ENCODE measurements at regions of chr11 and their contacts with region 1.

Region 1: GRCh38 chr11:33179348-33179803 is 18.1 kb upstream of the CSTF3 start:
- DNase-seq: no peak
- ATAC-seq: no peak
- H3K4me3 ChIP-seq: no peak overlapping the region
- H3K4me3 Mint-ChIP-seq: peak overlapping the region in 1 of 10 donors; percentile 70
- H3K27ac ChIP-seq: no peak overlapping the region
- H3K27ac Mint-ChIP-seq: peak overlapping the region in 1 of 9 donors; percentile 64
- H3K4me1 ChIP-seq: no peaks in the 10 kb centered on the region
- H3K4me1 Mint-ChIP-seq: peaks cover 6 to 20% (median 10%) of the 10 kb centered on the region in 7 donors
- H3K27me3 ChIP-seq: no peaks in the 10 kb centered on the region
- H3K27me3 Mint-ChIP-seq: no peaks in the 10 kb centered on the region

Region 2: DNA sequence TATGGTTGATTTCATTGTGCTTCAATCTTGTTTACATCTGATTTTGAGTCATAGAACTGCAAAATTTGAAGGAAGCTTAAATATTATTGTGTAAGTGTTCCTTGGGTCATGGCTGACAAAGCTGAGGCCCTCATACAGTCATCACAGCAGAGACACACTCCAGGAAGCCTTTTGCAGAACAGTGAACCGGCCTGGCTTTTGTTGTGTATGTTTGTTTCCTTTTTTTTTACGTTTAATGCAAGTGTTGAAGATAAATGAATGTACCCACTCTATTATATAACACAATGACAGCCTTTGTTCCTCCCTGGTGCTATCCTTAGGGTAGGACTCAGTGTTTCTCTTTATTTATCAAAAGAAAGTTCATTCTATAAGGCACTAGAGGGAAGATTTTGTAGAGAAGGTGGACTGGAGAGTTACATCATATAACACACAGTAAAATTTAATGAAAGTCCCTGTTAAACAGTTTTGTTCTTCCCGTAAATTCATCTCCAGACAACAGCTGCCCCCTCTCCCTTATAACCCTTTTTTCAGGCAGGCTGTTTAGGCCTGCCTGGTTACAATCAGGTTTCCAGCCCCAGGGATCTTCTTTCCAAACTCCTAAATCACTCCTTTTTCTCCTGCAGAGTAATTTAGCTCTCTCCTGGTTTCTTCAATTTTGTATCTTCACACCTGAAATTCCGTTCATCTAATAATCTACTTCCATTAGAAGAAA is 16.2 kb after region 1 on chr11:
- CTCF ChIA-PET with region 1: no interaction called
- POLR2A ChIA-PET with region 1: interaction called, 11 read pairs
- intact Hi-C with region 1: no loop called
- DNase-seq: no peak
- ATAC-seq: peak; percentile 88
- H3K4me3 ChIP-seq: no peak overlapping the region
- H3K4me3 Mint-ChIP-seq: no peak overlapping the region
- H3K27ac ChIP-seq: no peak overlapping the region
- H3K27ac Mint-ChIP-seq: no peak overlapping the region
- H3K4me1 ChIP-seq: no peaks in the 10 kb centered on the region
- H3K4me1 Mint-ChIP-seq: peaks cover 0 to 7% (median 0%) of the 10 kb centered on the region in 7 donors
- H3K27me3 ChIP-seq: no peaks in the 10 kb centered on the region
- H3K27me3 Mint-ChIP-seq: no peaks in the 10 kb centered on the region

Measured in naive thymus-derived CD4-positive, alpha-beta T cell (primary cell).